IMR-90 (cell line): ENCODE measurements at regions of chr6 and their contacts with region 1.

Region 1: GRCh38 chr6:100479179-100480035 is 14.7 kb upstream of the SIM1 start:
- DNase-seq: peak; percentile 49
- ATAC-seq: peak; percentile 83
- H3K4me3 ChIP-seq: no peak overlapping the region
- H3K27ac ChIP-seq: no peak overlapping the region
- H3K4me1 ChIP-seq: no peaks in the 10 kb centered on the region
- H3K27me3 ChIP-seq: peaks cover 25% of the 10 kb centered on the region
- CTCF ChIP-seq: peak; percentile 77
- POLR2A ChIP-seq: 0 out of 2 replicates have a peak, but pooled peaks have one; percentile 33
- RAD21 ChIP-seq: peak; percentile 89

Region 2: DNA sequence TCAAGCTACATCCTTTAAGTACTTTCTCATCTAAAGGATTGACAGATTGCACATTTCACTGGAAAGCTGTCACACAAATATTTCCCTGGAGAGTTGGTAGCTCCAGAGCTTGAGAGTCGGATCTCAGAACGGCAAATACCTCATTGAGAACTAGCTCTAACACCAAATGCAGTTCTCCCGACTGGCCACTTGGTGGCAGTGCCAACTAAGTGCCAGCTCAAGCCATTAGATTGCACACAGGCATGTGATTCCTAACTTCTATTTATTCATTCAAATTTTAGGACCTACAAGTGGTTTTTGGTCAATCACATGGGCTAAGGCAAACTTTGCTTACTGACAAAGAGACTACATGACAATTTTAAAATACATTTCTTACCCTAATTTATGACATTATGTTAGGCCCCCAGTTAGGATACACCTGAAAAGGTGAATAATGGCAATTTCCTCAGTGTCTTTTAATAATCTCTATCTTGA is 477.5 kb before region 1 on chr6:
- CTCF ChIA-PET with region 1: no interaction called
- POLR2A ChIA-PET with region 1: no interaction called
- dilution Hi-C with region 1: no loop called
- in situ Hi-C with region 1: no loop called
- intact Hi-C with region 1: loop called (anchors 2 kb)
- DNase-seq: peak; percentile 60
- ATAC-seq: peak; percentile 98
- H3K4me3 ChIP-seq: no peak overlapping the region
- H3K27ac ChIP-seq: no peak overlapping the region
- H3K4me1 ChIP-seq: no peaks in the 10 kb centered on the region
- H3K27me3 ChIP-seq: peaks cover 27% of the 10 kb centered on the region
- CTCF ChIP-seq: peak; percentile 90
- POLR2A ChIP-seq: no peak
- RAD21 ChIP-seq: peak; percentile 77

Region 3: DNA sequence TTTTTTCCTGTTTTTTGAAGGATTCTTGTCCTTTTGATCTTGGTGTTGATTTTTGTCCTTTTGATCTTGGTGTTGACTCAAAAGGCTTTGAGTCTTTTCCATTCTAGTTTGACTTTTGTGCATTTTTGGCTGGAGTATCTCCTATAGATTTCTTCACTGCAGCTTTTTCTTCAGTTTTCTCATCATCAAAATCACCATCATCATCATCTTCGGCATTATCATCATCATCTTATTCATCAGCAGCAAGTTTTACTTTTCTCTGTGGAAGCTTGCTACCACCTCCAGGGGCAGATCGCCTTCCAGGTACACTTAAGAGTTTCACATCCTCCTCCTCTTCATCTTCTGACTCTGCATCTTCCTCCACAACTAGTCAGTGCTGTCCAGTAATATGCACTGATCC is 428.9 kb before region 1 on chr6:
- CTCF ChIA-PET with region 1: interaction called, 10 read pairs
- POLR2A ChIA-PET with region 1: no interaction called
- dilution Hi-C with region 1: no loop called
- in situ Hi-C with region 1: no loop called
- intact Hi-C with region 1: no loop called
- DNase-seq: no peak
- ATAC-seq: no peak
- H3K4me3 ChIP-seq: no peak overlapping the region
- H3K27ac ChIP-seq: no peak overlapping the region
- H3K4me1 ChIP-seq: no peaks in the 10 kb centered on the region
- H3K27me3 ChIP-seq: no peaks in the 10 kb centered on the region; the same call in 1 of the 2 replicates
- CTCF ChIP-seq: no peak
- POLR2A ChIP-seq: no peak
- RAD21 ChIP-seq: no peak

Region 4: GRCh38 chr6:100121854-100122609 is 357.4 kb before region 1 on chr6:
- CTCF ChIA-PET with region 1: interaction called, 9 read pairs
- POLR2A ChIA-PET with region 1: no interaction called
- dilution Hi-C with region 1: loop called (anchors 25 kb)
- in situ Hi-C with region 1: loop called (anchors 5 kb)
- intact Hi-C with region 1: no loop called
- DNase-seq: no peak
- ATAC-seq: peak; percentile 59
- H3K4me3 ChIP-seq: no peak overlapping the region
- H3K27ac ChIP-seq: no peak overlapping the region
- H3K4me1 ChIP-seq: no peaks in the 10 kb centered on the region; the same call in 1 of the 2 replicates
- H3K27me3 ChIP-seq: peaks cover 32% of the 10 kb centered on the region
- CTCF ChIP-seq: no peak
- POLR2A ChIP-seq: no peak
- RAD21 ChIP-seq: no peak

Region 5: GRCh38 chr6:100393493-100393892 is 85.9 kb before region 1 on chr6:
- CTCF ChIA-PET with region 1: no interaction called
- POLR2A ChIA-PET with region 1: no interaction called
- dilution Hi-C with region 1: no loop called
- in situ Hi-C with region 1: no loop called
- intact Hi-C with region 1: no loop called
- DNase-seq: no peak
- ATAC-seq: no peak
- H3K4me3 ChIP-seq: no peak overlapping the region
- H3K27ac ChIP-seq: no peak overlapping the region
- H3K4me1 ChIP-seq: no peaks in the 10 kb centered on the region
- H3K27me3 ChIP-seq: peaks cover 10% of the 10 kb centered on the region
- CTCF ChIP-seq: no peak
- POLR2A ChIP-seq: no peak
- RAD21 ChIP-seq: no peak

Region 6: DNA sequence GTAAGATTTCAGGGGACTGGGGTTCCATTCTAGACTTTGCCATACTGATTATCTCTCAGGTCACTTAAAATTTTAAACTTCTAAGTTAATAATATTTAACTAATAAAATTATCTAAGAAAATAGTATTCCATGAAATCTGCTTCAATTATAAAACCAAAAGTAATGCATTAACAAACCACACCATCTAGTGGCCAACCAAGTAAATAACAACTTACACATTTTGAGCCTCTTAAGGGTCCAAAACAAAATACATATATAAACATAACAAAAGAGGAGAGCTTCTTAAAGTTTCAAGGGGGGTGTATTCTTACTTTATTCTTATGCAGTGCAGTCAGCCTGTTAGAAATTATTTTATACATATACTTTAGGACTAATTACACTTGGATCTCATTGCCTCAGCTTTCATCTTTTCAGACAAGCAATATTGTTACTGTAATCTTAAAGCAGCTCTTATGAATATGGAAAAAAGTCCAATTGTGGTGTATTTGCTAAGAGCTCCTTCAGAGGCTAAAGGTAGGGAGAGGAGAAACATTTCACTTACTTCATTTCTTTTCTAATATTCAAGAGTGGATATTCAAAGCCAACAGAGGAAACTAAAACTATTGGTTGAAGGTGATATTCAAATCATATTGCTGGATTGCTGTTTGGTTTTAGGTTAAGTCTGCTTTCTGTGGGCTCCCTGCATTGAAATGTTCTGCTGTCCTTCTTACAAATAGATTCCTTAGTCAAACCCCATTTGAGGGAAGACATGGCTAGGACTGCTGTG is 185.1 kb after region 1 on chr6:
- CTCF ChIA-PET with region 1: no interaction called
- POLR2A ChIA-PET with region 1: no interaction called
- dilution Hi-C with region 1: no loop called
- in situ Hi-C with region 1: no loop called
- intact Hi-C with region 1: loop called (anchors 5 kb)
- DNase-seq: peak; percentile 57
- ATAC-seq: peak; percentile 30
- H3K4me3 ChIP-seq: no peak overlapping the region
- H3K27ac ChIP-seq: no peak overlapping the region
- H3K4me1 ChIP-seq: no peaks in the 10 kb centered on the region
- H3K27me3 ChIP-seq: no peaks in the 10 kb centered on the region
- CTCF ChIP-seq: peak; percentile 64
- POLR2A ChIP-seq: no peak
- RAD21 ChIP-seq: peak; percentile 63

Region 7: DNA sequence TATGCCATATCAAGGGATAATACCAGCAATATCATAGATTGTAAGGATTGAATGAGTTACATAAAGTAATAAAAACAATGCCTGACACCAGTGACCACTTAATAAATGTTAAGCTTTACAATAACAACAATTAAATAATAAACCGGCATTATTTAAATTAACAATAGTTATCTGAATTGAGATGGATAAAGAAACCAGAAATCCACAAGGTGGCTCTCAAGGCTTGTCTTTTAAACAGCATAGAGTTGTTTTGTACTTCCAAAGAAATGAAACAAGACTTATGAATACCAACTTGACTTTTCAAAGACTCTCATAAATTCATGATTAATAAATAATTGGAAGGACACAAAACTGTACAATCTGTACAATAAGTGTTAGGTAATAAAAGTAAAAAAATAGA is 198.6 kb after region 1 on chr6:
- CTCF ChIA-PET with region 1: no interaction called
- POLR2A ChIA-PET with region 1: no interaction called
- dilution Hi-C with region 1: no loop called
- in situ Hi-C with region 1: no loop called
- intact Hi-C with region 1: no loop called
- DNase-seq: peak; percentile 28
- ATAC-seq: no peak
- H3K4me3 ChIP-seq: no peak overlapping the region
- H3K27ac ChIP-seq: no peak overlapping the region
- H3K4me1 ChIP-seq: no peaks in the 10 kb centered on the region
- H3K27me3 ChIP-seq: no peaks in the 10 kb centered on the region
- CTCF ChIP-seq: peak; percentile 37; the same call in 1 of the 2 replicates
- POLR2A ChIP-seq: no peak
- RAD21 ChIP-seq: peak; percentile 23; the same call in 1 of the 2 replicates